Ascending aorta (tissue), 2 donors: ENCODE measurements at regions of chr10 and their contacts with region 1.

Region 1: DNA sequence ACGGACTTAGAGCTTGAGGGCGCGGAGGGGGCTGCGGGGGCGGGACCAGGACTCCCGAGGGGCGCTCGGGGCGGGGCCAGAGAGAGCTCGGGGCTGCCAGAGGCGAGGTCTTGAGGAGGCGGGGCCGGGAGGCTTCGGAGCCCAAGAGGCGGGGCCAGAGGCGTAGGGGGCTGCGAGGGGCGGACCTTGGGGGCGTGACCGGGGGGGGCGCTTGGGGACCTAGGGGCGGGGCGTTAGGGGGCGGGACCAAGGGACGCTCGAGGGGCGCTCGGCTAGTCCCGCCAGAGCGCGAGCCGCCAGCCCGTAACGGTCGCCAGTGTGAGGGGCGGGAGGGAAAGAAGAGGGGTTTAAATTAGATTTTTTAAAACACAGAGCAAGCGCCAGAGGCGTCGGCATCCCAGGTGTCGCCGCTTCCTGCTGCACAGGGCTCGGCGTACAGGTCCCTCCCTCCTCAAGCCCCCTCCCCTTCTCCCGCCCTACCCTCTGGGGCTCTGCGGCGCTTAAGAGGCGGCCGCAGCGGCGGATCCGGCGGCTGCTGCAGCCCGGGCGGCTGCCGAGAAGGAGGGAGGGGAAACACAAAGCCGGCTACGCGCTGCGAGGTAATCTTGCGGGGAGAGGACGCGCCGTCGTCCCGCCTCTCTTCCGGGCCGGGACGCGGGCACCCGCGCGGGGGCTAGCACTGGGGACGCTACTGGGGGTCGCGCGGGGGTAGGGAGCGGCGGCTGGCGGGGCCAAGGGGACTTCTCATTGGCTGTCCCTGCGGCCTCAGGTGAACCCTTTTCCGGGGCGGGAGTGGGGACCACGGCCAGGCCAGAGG is at the start of gene ADD3:
- DNase-seq: peak; percentile 77 to 97
- H3K4me3 ChIP-seq: peak within 1 kb of the TSS; percentile 68 to 100
- H3K27ac ChIP-seq: peak within 1 kb of the TSS; percentile 94 to 99
- H3K4me1 ChIP-seq: peaks cover 3 to 15% of the 10 kb centered on the region in 2 donors
- H3K27me3 ChIP-seq: no peaks in the 10 kb centered on the region
- CTCF ChIP-seq: no peak
- total RNA-seq, gene ADD3: 93.0 TPM

Region 2: GRCh38 chr10:109894516-109894915 is 113.4 kb before region 1 on chr10:
- intact Hi-C with region 1: loop called (anchors 2 kb)
- DNase-seq: peak; percentile 46 to 91
- H3K4me3 ChIP-seq: peak overlapping the region; percentile 6 to 18
- H3K27ac ChIP-seq: peak overlapping the region; percentile 82 to 94
- H3K4me1 ChIP-seq: peaks cover 19 to 94% of the 10 kb centered on the region in 2 donors
- H3K27me3 ChIP-seq: no peaks in the 10 kb centered on the region
- CTCF ChIP-seq: no peak

Region 3: GRCh38 chr10:109922976-109923921 is 84.7 kb before region 1 on chr10 and contains the start of gene XPNPEP1:
- intact Hi-C with region 1: loop called (anchors 2 kb)
- DNase-seq: peak; percentile 65 to 94
- H3K4me3 ChIP-seq: peak within 1 kb of the TSS; percentile 94 to 97
- H3K27ac ChIP-seq: peak within 1 kb of the TSS; percentile 93 to 98
- H3K4me1 ChIP-seq: peaks cover 3 to 10% of the 10 kb centered on the region in 2 donors
- H3K27me3 ChIP-seq: no peaks in the 10 kb centered on the region
- CTCF ChIP-seq: peak in 2 of 3 experiments; percentile 5 to 12
- total RNA-seq, gene XPNPEP1: 212 TPM

Region 4: DNA sequence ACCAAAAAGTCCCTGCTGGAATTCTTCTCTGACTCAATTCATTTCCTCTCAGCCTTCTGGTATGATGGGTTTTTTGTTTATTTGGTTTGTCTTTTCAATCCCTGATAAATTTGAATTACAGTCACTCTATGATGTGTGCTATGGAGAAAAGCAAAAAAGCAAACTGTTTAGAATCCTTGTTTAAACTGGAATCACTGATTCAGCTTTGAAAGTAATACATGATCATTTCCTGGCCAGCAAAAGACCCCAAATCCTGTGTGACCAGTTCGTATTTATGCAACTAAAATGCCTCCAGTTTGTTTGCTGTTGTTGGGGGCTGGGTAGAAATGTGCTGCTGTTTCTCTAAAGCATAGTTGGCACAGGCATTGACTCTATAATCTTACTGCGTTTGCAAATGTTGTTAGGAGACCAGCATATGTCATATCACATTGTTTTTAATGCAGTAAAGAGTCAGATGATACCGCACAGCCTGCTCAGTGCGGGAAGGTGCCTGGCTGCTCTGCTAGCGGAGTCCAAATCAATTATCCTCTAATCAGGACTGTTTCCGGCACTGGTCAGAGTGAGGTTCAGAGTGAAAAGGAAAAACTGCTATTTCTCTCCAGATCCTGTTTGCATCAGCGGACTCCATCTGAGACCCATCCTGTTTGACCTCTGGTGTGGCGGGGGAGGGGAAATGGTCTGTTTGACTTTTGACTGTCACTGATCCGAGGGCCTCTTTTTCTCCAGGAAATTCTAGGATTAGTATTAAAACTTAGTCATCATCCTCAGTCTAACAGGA is 40.8 kb before region 1 on chr10:
- intact Hi-C with region 1: loop called (anchors 1 kb)
- DNase-seq: no peak
- H3K4me3 ChIP-seq: no peak overlapping the region
- H3K27ac ChIP-seq: peak overlapping the region in 1 of 2 donors; percentile 2
- H3K4me1 ChIP-seq: peaks cover 11 to 47% of the 10 kb centered on the region in 2 donors
- H3K27me3 ChIP-seq: no peaks in the 10 kb centered on the region
- CTCF ChIP-seq: no peak

Region 5: GRCh38 chr10:109978481-109978880 is 29.4 kb before region 1 on chr10:
- intact Hi-C with region 1: no loop called
- DNase-seq: no peak
- H3K4me3 ChIP-seq: peak overlapping the region in 1 of 2 donors; percentile 31
- H3K27ac ChIP-seq: peak overlapping the region; percentile 81
- H3K4me1 ChIP-seq: peaks cover 4 to 47% of the 10 kb centered on the region in 2 donors
- H3K27me3 ChIP-seq: no peaks in the 10 kb centered on the region
- CTCF ChIP-seq: peak; percentile 9 to 60 (median 51)

Region 6: GRCh38 chr10:110076559-110077318 is 68.8 kb after region 1 on chr10:
- intact Hi-C with region 1: loop called (anchors 2 kb)
- DNase-seq: peak in 1 of 2 donors; percentile 66
- H3K4me3 ChIP-seq: no peak overlapping the region
- H3K27ac ChIP-seq: peak overlapping the region; percentile 57 to 63
- H3K4me1 ChIP-seq: peaks cover 6 to 46% of the 10 kb centered on the region in 2 donors
- H3K27me3 ChIP-seq: no peaks in the 10 kb centered on the region
- CTCF ChIP-seq: no peak

Region 7: DNA sequence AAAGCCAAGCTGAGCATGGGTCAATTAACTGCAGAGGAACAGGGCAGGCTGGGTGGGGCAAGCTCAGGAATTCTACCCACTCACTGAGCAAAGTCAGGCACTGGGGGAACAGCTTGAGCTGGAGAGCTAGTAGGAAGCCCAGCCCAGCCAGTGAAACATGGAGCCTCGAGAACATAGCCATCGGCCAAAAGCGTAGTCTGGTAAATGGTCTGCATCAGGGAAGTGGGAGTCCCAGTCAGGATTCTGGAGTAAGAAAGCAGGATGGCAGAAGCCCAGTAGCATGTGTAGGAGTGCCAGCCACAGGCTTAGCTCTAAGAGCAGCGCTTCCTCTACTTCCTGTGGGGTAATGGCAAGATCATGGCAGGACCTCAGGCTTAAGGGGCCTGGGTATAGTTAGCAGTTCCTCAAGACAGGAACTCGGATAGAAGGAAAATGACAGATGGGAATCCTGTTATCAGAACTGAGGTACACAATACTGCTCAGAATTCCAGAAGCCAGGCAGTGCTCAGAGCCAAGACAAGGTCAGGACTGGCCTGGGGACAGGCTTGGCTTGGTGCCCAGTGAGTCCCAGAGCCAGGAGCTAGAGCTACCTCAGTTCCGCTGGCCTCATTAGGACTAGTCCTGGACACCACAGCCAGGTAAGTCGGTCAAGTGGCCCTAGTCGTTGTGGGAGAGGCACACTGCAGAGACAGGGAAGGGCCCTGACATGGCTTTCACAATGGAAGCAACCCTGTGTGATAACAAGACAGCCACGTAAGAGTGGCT is 134.1 kb after region 1 on chr10:
- intact Hi-C with region 1: no loop called
- DNase-seq: no peak
- H3K4me3 ChIP-seq: no peak overlapping the region
- H3K27ac ChIP-seq: no peak overlapping the region
- H3K4me1 ChIP-seq: peaks cover 0 to 17% of the 10 kb centered on the region in 2 donors
- H3K27me3 ChIP-seq: no peaks in the 10 kb centered on the region
- CTCF ChIP-seq: no peak

Region 8: DNA sequence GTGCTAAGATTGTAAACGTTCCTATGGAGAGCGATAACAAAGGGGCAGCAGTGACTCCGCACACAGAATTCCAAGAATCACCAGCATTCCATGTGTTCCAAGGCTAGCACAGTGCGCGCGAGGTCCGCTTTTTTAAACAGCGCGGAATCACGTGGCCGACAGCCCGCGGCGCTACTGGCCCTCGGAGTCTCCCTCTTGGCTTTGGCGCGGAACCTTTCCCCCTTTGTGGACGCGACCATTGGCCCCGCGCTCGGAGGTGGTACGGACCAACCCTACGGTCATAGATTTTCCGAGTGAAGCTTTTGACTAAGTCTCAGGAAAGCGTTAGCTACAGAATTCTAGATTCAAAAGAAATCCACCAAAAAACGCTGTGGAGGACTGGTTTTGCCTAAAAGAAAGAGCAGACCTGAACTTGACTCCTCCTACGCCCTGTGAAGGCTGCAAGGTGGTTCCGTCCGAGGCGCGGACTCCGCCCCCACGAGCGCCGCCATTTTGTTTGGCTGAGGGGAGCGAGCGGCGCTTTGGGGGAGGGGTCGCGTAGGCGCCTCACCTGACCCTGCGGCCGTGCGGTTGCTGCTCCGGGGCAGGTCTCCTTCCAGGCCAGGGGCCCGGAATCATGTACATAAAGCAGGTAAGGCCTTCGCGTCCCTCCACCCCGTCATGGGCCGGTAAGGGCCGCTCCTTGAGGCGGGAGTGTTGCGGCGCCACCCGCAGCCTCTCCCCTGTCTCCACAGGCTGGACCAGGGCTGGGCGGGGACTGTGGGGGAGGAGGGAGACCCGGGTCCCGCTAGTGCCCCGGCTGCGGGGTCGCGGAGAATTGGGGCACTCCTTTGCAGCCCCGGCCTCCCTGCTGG is 559.5 kb after region 1 on chr10 and contains the start of gene SMC3:
- intact Hi-C with region 1: loop called (anchors 5 kb)
- DNase-seq: peak; percentile 40 to 94
- H3K4me3 ChIP-seq: peak within 1 kb of the TSS; percentile 81 to 97
- H3K27ac ChIP-seq: peak within 1 kb of the TSS; percentile 84 to 85
- H3K4me1 ChIP-seq: peaks cover 0 to 10% of the 10 kb centered on the region in 2 donors
- H3K27me3 ChIP-seq: no peaks in the 10 kb centered on the region
- CTCF ChIP-seq: no peak
- total RNA-seq, gene SMC3: 14.8 TPM